Uterus (tissue), 4 donors: ENCODE measurements at regions of chr4 and their contacts with region 1.

Region 1: DNA sequence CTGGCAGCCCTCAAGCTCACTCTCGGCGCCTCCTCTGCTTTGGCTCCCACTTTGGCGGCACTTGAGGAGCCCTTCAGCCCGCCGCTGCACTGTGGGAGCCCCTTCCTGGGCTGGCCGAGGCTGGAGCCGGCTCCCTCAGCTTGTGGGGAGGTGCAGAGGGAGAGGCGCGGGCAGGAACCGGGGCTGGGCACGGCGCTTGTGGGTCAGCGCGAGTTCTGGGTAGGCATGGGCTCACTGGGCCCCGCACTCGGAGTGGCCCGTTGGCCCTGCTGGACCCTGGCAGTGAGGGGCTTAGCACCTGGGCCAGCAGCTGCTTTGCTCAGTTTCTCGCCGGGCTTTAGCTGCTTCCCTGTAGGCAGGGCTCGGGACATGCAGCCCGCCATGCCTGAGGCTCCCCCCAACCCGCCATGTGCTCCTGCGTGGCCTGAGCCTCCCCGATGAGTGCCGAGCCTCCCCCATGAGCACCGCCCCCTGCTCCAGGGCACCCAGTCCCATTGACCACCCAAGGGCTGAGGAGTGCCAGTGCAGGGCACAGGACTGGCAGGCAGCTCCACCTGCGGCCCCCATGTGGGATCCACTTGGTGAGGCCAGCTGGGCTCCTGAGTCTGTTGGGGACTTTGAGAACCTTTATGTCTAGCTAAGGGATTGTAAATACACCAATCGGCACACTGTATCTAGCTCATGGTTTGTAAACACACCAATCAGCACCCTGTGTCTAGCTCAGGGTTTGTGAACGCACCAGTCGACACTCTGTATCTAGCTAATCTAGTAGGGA is 101.5 kb upstream of the DRD5 start:
- DNase-seq: no peak
- H3K4me3 ChIP-seq: no peak overlapping the region
- H3K27ac ChIP-seq: no peak overlapping the region
- H3K4me1 ChIP-seq: no peaks in the 10 kb centered on the region
- H3K27me3 ChIP-seq: no peaks in the 10 kb centered on the region
- CTCF ChIP-seq: no peak
- POLR2A ChIP-seq: no peak

Region 2: GRCh38 chr4:7843831-7844593 is 1835.9 kb before region 1 on chr4:
- intact Hi-C with region 1: loop called (anchors 10 kb)
- DNase-seq: peak; percentile 73 to 82
- H3K4me3 ChIP-seq: no peak overlapping the region
- H3K27ac ChIP-seq: peak overlapping the region; percentile 84 to 96
- H3K4me1 ChIP-seq: peaks cover 10 to 18% of the 10 kb centered on the region in 2 donors
- H3K27me3 ChIP-seq: no peaks in the 10 kb centered on the region
- CTCF ChIP-seq: peak; percentile 37 to 67 (median 55)
- POLR2A ChIP-seq: no peak

Region 3: GRCh38 chr4:9832640-9833308 is 152.9 kb after region 1 on chr4:
- intact Hi-C with region 1: no loop called
- DNase-seq: no peak
- H3K4me3 ChIP-seq: no peak overlapping the region
- H3K27ac ChIP-seq: no peak overlapping the region
- H3K4me1 ChIP-seq: no peaks in the 10 kb centered on the region
- H3K27me3 ChIP-seq: no peaks in the 10 kb centered on the region
- CTCF ChIP-seq: no peak
- POLR2A ChIP-seq: no peak

Region 4: GRCh38 chr4:10605746-10606482 is 926.0 kb after region 1 on chr4:
- intact Hi-C with region 1: no loop called
- DNase-seq: no peak
- H3K4me3 ChIP-seq: no peak overlapping the region
- H3K27ac ChIP-seq: no peak overlapping the region
- H3K4me1 ChIP-seq: no peaks in the 10 kb centered on the region
- H3K27me3 ChIP-seq: no peaks in the 10 kb centered on the region
- CTCF ChIP-seq: no peak
- POLR2A ChIP-seq: no peak